ENCODE measurements at regions of chr1 and their contacts with region 1.

Region 1: DNA sequence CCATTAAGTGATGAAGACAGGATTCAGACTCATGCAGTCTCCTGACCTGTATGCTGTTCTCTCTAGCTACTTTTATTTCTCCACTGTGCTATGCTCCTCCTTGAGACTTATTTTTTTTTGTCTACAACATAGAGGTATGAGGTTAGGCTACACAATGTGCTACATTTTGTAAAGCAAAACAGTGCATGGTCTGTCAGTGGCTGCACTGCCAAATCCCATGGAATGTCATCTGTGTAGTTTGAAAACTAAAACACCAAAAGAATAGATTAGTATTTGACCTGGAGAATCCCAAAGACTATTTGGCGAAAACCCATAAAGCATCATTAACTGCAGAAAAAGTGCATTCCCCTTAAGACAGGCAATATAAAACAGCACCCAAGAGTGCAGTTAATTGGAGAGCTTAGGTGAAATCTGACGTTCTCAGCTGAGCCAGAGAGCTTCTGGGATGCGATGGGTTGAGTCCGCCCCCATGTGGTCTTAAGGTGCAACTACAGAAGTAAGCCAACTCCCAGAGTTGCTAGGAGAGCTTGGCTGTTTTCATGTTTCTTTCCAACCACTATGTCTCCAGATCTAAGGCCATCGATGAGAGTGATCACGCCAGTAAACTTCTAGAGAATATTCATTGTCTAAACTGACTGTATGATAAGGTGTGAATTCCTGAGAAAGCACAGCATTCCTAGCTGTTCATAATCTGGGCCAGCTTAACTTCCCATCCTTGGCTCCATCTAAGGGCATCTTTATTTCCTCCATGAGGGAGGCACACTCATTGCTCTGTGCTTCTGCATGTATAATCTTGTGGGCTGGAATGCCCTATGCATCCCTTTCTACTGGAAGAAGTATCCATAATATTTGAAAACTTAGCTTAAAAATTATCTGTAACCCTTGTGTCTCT is 20.7 kb upstream of the CYP2J2 start:
- DNase-seq: peak in 1 of 3 donors; percentile 37
- ATAC-seq: peak; percentile 87 to 88
- H3K4me3 ChIP-seq: no peak overlapping the region
- H3K27ac ChIP-seq: no peak overlapping the region
- H3K4me1 ChIP-seq: no peaks in the 10 kb centered on the region
- H3K27me3 ChIP-seq: no peaks in the 10 kb centered on the region

Region 2: GRCh38 chr1:58515794-58516401 is 1431.4 kb before region 1 on chr1:
- intact Hi-C with region 1: loop called in 1 of 4 experiments (anchors 10 kb)
- DNase-seq: peak in 1 of 3 donors; percentile 16
- ATAC-seq: peak; percentile 47 to 63
- H3K4me3 ChIP-seq: no peak overlapping the region
- H3K27ac ChIP-seq: no peak overlapping the region
- H3K4me1 ChIP-seq: no peaks in the 10 kb centered on the region
- H3K27me3 ChIP-seq: no peaks in the 10 kb centered on the region

Region 3: DNA sequence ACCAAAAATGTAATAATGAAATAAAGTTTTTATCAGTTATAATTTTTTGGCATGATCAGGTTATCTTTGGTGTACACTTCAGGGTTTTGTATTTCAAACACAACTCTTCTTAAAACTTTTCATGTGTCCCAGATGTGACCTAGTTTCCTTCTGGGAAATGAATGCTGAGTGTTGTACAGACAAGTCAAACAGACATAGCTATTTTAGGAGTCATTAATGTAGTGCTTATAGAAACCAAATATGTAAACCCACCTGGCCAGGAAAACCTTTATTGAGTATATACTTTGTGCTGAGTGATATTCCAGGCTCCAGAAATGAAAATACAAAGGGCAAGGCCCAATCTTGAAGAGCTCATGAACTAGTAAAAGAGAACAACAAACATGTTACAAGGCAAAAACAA is 158.5 kb before region 1 on chr1:
- intact Hi-C with region 1: no loop called
- DNase-seq: no peak
- ATAC-seq: no peak
- H3K4me3 ChIP-seq: no peak overlapping the region
- H3K27ac ChIP-seq: no peak overlapping the region
- H3K4me1 ChIP-seq: no peaks in the 10 kb centered on the region
- H3K27me3 ChIP-seq: no peaks in the 10 kb centered on the region

Region 4: GRCh38 chr1:59879574-59879973 is 67.7 kb before region 1 on chr1:
- intact Hi-C with region 1: loop called (anchors 2 to 5 kb)
- DNase-seq: peak; percentile 57 to 82 (median 59)
- ATAC-seq: peak; percentile 81 to 89
- H3K4me3 ChIP-seq: no peak overlapping the region
- H3K27ac ChIP-seq: no peak overlapping the region
- H3K4me1 ChIP-seq: no peaks in the 10 kb centered on the region
- H3K27me3 ChIP-seq: no peaks in the 10 kb centered on the region

Region 5: GRCh38 chr1:59885160-59885832 is 62.0 kb before region 1 on chr1:
- intact Hi-C with region 1: loop called in 3 of 4 experiments (anchors 2 to 5 kb)
- DNase-seq: peak in 1 of 3 donors; percentile 30
- ATAC-seq: peak in 1 of 2 donors; percentile 41
- H3K4me3 ChIP-seq: no peak overlapping the region
- H3K27ac ChIP-seq: peak overlapping the region; percentile 30
- H3K4me1 ChIP-seq: peaks cover 2% of the 10 kb centered on the region
- H3K27me3 ChIP-seq: no peaks in the 10 kb centered on the region

Region 6: DNA sequence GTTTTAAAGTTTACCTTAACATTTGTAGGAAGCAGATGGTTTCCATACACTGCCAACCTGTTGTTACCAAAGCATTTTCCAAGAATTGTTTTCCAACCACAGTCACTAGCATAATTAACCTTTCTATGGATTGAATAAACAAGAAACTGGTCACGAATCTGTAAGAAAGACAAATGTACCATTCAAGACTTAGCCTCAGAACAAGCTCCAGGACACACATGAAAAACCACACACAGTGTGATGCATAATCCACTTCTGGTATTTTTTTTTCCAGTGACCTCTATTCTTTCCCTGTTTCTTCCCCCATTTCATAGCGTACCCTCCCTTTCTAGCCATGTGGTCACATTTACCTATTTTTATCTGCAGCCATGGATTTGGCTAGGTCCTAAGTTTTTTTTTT is 155.9 kb after region 1 on chr1:
- intact Hi-C with region 1: no loop called
- DNase-seq: no peak
- ATAC-seq: no peak
- H3K4me3 ChIP-seq: no peak overlapping the region
- H3K27ac ChIP-seq: no peak overlapping the region
- H3K4me1 ChIP-seq: no peaks in the 10 kb centered on the region
- H3K27me3 ChIP-seq: no peaks in the 10 kb centered on the region